T-cell (primary cell): ENCODE measurements at regions of chr4 and their contacts with region 1.

Region 1: GRCh38 chr4:176949029-176949428 is 156.3 kb upstream of the VEGFC start:
- DNase-seq: no peak
- ATAC-seq: no peak
- H3K4me3 ChIP-seq: no peak overlapping the region
- H3K4me3 Mint-ChIP-seq: no peak overlapping the region
- H3K27ac ChIP-seq: no peak overlapping the region
- H3K27ac Mint-ChIP-seq: no peak overlapping the region
- H3K4me1 ChIP-seq: no peaks in the 10 kb centered on the region
- H3K4me1 Mint-ChIP-seq: no peaks in the 10 kb centered on the region
- H3K27me3 ChIP-seq: no peaks in the 10 kb centered on the region
- H3K27me3 Mint-ChIP-seq: no peaks in the 10 kb centered on the region

Region 2: DNA sequence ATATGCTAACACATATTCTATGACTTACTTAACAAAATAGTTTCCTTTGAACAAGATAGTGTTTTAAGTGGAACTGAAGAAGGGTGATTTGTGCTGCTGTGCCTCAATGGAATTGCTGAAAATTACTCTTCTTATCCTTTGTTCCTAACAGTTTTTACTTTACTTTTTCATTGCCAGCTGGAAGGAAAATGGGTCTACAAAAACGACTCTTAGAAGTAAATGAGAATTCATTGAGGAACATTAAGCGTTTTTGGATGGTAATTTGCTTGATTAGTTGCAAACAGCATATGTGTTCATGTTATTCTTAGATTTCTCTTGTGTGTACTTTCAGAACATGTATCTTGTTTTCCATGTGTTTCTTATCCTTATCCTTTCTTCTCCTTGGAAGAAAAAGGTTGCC is 14.1 kb after region 1 on chr4:
- CTCF ChIA-PET with region 1: interaction called in 1 of 2 experiments, 15 read pairs
- POLR2A ChIA-PET with region 1: no interaction called
- DNase-seq: no peak
- ATAC-seq: no peak
- H3K4me3 ChIP-seq: no peak overlapping the region
- H3K4me3 Mint-ChIP-seq: no peak overlapping the region
- H3K27ac ChIP-seq: no peak overlapping the region
- H3K27ac Mint-ChIP-seq: no peak overlapping the region
- H3K4me1 ChIP-seq: no peaks in the 10 kb centered on the region
- H3K4me1 Mint-ChIP-seq: no peaks in the 10 kb centered on the region
- H3K27me3 ChIP-seq: no peaks in the 10 kb centered on the region
- H3K27me3 Mint-ChIP-seq: no peaks in the 10 kb centered on the region

Region 3: GRCh38 chr4:176981551-176981950 is 32.5 kb after region 1 on chr4:
- CTCF ChIA-PET with region 1: no interaction called
- POLR2A ChIA-PET with region 1: no interaction called
- DNase-seq: no peak
- ATAC-seq: no peak
- H3K4me3 ChIP-seq: no peak overlapping the region
- H3K4me3 Mint-ChIP-seq: no peak overlapping the region
- H3K27ac ChIP-seq: no peak overlapping the region
- H3K27ac Mint-ChIP-seq: no peak overlapping the region
- H3K4me1 ChIP-seq: no peaks in the 10 kb centered on the region
- H3K4me1 Mint-ChIP-seq: no peaks in the 10 kb centered on the region
- H3K27me3 ChIP-seq: no peaks in the 10 kb centered on the region
- H3K27me3 Mint-ChIP-seq: peaks cover 0 to 4% of the 10 kb centered on the region in 2 donors